ENCODE measurements at regions of chr16 and their contacts with region 1.

Region 1: DNA sequence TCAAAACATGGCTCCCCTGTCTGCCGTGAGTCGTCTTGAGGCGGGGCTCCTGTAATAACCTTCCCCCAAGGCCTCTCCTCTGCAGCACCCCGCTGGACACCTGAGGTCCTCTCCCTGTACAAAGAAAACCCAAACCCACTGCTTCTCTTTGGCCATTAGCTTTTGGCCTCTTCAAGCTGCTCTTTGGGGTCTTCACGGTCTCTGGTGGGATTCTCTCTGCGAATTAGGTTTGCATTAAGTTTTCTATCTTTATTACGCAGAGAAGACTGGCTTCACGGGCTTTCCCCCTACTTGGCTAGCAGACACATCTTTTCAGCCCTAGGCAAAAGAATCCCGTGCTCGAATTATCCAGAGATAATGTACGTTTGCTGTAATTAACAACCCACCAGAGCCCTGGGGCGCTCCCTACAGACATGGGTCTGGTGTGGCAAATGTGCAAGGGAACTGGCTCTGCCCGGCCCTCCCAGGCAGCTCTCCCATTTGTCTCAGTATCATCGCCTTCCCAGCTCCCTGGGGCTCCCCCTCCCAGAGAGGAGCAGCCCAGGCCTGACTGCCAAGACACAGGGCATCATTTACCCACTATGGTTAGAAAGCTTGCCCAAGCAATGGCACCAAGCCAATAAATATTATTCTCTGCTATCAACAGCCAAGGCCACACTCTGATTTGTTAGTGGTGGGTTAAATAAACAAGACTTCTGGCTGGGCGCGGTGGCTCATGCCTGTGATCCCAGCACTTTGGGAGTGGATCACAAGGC is 24.7 kb upstream of the KLHDC4 start:
- DNase-seq: peak; percentile 98
- H3K4me3 Mint-ChIP-seq: peak overlapping the region; percentile 17
- H3K27ac Mint-ChIP-seq: peak overlapping the region; percentile 93
- H3K4me1 Mint-ChIP-seq: peaks cover 25% of the 10 kb centered on the region
- H3K27me3 Mint-ChIP-seq: no peaks in the 10 kb centered on the region
- CTCF ChIP-seq: no peak

Region 2: DNA sequence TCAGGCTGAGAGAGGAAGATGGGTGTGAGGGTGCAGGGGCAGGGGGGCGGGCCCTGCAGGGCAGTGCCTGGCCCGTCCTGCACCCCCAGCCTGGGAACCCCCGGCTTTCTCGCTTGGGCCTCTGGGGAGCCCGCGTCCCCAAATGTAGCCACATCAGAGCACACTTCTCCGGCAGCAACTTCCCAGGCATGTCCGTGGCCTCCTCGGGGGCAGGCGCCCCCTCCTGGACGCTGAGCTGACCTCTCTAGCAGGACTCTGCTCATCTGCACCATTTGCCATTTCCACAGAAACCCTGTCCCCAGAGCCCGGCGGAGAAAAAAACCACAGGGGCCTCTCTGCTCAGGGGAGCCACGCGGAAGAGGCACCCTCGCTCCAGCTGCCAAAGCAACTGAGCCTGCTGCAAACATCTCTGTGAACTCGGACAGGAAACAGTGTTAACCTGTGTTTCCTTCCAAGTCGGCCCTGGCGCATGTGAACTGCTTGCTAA is 88.1 kb before region 1 on chr16:
- CTCF ChIA-PET with region 1: no interaction called
- POLR2A ChIA-PET with region 1: no interaction called
- intact Hi-C with region 1: no loop called
- DNase-seq: no peak
- H3K4me3 Mint-ChIP-seq: no peak overlapping the region
- H3K27ac Mint-ChIP-seq: no peak overlapping the region
- H3K4me1 Mint-ChIP-seq: no peaks in the 10 kb centered on the region
- H3K27me3 Mint-ChIP-seq: no peaks in the 10 kb centered on the region
- CTCF ChIP-seq: peak; percentile 9

Region 3: GRCh38 chr16:87765776-87766484 is 24.5 kb before region 1 on chr16 and contains the start of gene KLHDC4:
- CTCF ChIA-PET with region 1: interaction called, 5 read pairs
- POLR2A ChIA-PET with region 1: interaction called, 12 read pairs
- intact Hi-C with region 1: no loop called
- DNase-seq: peak; percentile 84
- H3K4me3 Mint-ChIP-seq: peak within 1 kb of the TSS; percentile 88
- H3K27ac Mint-ChIP-seq: peak within 1 kb of the TSS; percentile 95
- H3K4me1 Mint-ChIP-seq: peaks cover 24% of the 10 kb centered on the region
- H3K27me3 Mint-ChIP-seq: no peaks in the 10 kb centered on the region
- CTCF ChIP-seq: no peak
- total RNA-seq, gene KLHDC4: 82.9 and 106 TPM in 2 replicates

Region 4: DNA sequence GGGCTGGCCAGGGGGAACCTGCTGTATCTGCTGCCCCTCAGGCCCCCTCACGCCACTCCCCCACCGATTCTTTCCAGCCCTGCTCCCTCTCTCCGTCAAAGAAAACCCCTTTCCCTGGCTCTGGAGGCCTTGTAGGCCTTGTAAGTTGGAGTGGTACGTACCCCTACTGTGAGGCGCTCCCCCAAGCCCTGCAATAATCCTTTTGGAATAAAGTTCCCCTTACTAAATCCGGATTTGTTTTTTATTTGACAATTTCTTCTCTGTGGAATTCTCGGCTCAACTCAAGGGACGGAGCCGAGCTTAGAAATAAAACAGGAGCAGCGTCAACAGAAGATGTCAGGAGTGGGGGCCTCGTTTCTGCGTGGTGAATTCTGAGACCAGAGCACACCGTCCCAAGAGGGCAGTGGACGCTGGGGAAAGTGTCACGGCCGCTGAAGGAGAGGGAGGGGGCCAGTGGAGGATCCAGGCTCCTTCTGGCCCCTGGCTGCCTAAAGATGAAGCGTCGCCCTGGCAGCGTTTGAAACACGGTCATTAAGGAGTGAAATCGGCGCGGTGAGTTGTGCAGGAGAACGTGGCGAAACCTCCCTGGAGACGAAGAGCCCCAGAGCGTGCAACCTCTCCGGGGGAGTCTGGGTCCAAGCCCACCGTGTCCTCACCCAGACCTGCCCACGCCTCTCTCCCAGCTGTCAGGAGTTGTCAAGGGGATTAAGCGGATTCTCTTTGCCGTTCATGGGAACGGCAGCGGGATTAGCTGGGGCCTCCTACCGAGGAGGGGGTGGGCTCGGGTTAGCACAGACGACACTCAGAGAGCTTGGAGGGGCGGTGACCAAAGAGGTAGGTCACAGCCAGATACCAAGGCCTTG is 31.9 kb after region 1 on chr16:
- CTCF ChIA-PET with region 1: interaction called, 4 read pairs
- POLR2A ChIA-PET with region 1: interaction called, 44 read pairs
- intact Hi-C with region 1: no loop called
- DNase-seq: no peak
- H3K4me3 Mint-ChIP-seq: no peak overlapping the region
- H3K27ac Mint-ChIP-seq: peak overlapping the region; percentile 35
- H3K4me1 Mint-ChIP-seq: peaks cover 13% of the 10 kb centered on the region
- H3K27me3 Mint-ChIP-seq: no peaks in the 10 kb centered on the region
- CTCF ChIP-seq: no peak

Region 5: DNA sequence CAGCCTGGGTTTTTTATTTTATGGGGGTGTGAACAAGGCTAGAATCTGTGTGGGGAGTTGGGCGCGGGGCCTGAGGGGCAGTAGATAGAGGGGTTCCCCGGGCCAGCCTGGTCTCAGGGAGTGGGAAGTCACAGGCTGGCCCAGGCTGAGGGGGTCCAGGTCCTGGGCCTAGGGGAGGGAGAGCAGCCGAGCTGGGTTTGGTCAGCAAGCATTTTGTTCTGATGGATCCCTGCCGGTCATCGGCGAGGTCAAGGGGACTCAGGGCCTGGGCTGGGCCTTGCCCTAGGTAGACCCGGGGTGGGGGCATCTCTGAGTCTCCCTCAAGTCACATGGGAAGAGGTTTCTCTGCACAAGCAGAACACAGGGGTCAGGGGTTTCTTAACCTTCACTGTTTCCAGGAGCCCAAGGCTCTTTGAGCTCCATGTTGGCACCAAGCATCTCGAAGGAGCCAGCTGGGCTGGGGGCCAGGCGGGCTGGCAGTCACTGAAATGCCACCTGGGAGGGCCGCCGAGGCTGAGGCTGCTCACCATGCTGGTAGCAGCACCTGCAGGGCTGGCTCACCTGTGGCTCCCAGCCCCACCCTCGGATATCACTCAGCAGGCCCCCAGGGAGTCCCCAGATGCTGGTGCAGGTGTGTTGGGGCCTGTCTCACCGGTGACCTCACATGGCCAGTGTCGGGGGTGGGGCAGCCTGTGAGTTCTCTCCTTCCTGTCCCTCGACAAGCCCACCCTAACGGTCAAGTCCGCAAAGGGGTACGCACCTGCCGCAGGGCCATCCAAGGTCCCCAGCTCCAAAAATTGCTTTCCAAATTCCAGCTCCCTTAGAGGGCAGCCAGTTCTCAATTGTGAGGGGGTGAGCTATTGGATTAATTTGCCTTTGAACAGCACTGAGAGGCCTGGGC is 37.9 kb after region 1 on chr16:
- CTCF ChIA-PET with region 1: interaction called, 4 read pairs
- POLR2A ChIA-PET with region 1: interaction called, 44 read pairs
- intact Hi-C with region 1: no loop called
- DNase-seq: peak; percentile 61
- H3K4me3 Mint-ChIP-seq: no peak overlapping the region
- H3K27ac Mint-ChIP-seq: no peak overlapping the region
- H3K4me1 Mint-ChIP-seq: peaks cover 8% of the 10 kb centered on the region
- H3K27me3 Mint-ChIP-seq: no peaks in the 10 kb centered on the region
- CTCF ChIP-seq: no peak

Region 6: GRCh38 chr16:87834623-87835407 is 44.4 kb after region 1 on chr16:
- CTCF ChIA-PET with region 1: no interaction called
- POLR2A ChIA-PET with region 1: interaction called, 14 read pairs
- intact Hi-C with region 1: no loop called
- DNase-seq: peak; percentile 50
- H3K4me3 Mint-ChIP-seq: no peak overlapping the region
- H3K27ac Mint-ChIP-seq: no peak overlapping the region
- H3K4me1 Mint-ChIP-seq: no peaks in the 10 kb centered on the region
- H3K27me3 Mint-ChIP-seq: no peaks in the 10 kb centered on the region
- CTCF ChIP-seq: no peak

Region 7: DNA sequence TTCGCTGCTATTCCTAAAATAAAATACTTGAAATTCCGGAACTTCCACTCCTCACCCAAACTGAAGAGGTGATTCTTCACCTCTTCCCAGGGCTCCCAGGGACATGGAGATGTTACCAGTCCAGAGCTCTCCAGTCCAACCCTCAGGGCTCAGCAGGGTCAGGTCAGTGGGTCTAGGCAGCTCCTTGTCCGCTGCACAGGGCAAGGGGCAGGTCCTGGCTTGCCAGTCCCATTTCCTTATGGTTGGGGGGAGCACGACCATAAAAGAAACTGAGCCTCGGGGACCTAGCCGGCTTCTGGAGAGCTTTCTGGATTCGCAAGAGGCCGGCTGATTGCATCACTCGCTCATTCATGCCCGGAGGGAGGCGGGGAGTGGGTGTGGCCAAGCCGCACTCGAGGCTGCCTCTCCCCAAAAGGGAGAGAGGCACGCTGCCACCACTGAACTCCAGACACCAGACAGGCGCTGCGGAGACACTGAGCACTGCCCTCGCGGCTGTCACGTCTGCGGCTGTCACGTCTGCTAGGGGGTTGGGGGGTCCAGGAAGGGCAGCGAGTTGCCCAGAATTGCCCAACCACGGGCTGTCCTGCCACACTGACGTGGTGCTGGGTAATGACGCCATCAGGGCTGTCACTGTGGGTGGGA is 63.1 kb after region 1 on chr16:
- CTCF ChIA-PET with region 1: interaction called, 7 read pairs
- POLR2A ChIA-PET with region 1: interaction called, 19 read pairs
- intact Hi-C with region 1: no loop called
- DNase-seq: peak; percentile 96
- H3K4me3 Mint-ChIP-seq: peak overlapping the region; percentile 52
- H3K27ac Mint-ChIP-seq: peak overlapping the region; percentile 83
- H3K4me1 Mint-ChIP-seq: peaks cover 36% of the 10 kb centered on the region
- H3K27me3 Mint-ChIP-seq: no peaks in the 10 kb centered on the region
- CTCF ChIP-seq: no peak

Region 8: GRCh38 chr16:87860553-87861299 is 70.3 kb after region 1 on chr16:
- CTCF ChIA-PET with region 1: interaction called, 5 read pairs
- POLR2A ChIA-PET with region 1: interaction called, 132 read pairs
- intact Hi-C with region 1: no loop called
- DNase-seq: peak; percentile 72
- H3K4me3 Mint-ChIP-seq: peak overlapping the region; percentile 67
- H3K27ac Mint-ChIP-seq: peak overlapping the region; percentile 75
- H3K4me1 Mint-ChIP-seq: peaks cover 38% of the 10 kb centered on the region
- H3K27me3 Mint-ChIP-seq: no peaks in the 10 kb centered on the region
- CTCF ChIP-seq: no peak

Region 9: GRCh38 chr16:87895641-87896141 is 105.2 kb after region 1 on chr16:
- CTCF ChIA-PET with region 1: no interaction called
- POLR2A ChIA-PET with region 1: no interaction called
- intact Hi-C with region 1: no loop called
- DNase-seq: peak; percentile 38
- H3K4me3 Mint-ChIP-seq: peak overlapping the region; percentile 15
- H3K27ac Mint-ChIP-seq: no peak overlapping the region
- H3K4me1 Mint-ChIP-seq: peaks cover 12% of the 10 kb centered on the region
- H3K27me3 Mint-ChIP-seq: no peaks in the 10 kb centered on the region
- CTCF ChIP-seq: no peak